Dorsolateral prefrontal cortex (tissue), 120 donors: ENCODE measurements at regions of chr15 and their contacts with region 1.

Region 1: DNA sequence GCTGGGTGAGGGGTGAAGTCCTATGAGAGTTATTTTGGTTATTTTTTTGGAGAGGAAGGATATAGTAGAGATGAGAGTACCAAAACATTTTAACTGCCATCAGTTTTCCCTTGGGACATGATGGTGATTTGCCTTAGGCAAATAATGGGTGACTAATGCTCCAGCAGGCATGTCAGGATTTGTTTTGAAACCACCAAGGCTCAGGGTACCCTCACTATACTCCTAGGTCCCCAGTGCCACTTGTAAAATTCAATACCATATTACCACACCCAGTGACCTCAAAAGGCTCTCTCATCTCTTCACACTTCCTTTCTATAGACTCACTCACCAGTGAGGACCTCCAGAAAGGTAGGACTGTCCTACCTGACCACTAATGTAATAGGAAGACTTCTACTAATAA is 83.6 kb downstream of the WDR72 start:
- DNase-seq: no peak
- H3K4me3 ChIP-seq: no peak overlapping the region
- H3K27ac ChIP-seq: no peak overlapping the region
- H3K27me3 ChIP-seq: peaks cover 0 to 11% (median 0%) of the 10 kb centered on the region in 45 donors
- CTCF ChIP-seq: no peak

Region 2: GRCh38 chr15:53448232-53449001 is 227.4 kb before region 1 on chr15:
- intact Hi-C with region 1: no loop called
- DNase-seq: no peak
- H3K4me3 ChIP-seq: peak overlapping the region in 1 of 59 donors; percentile 12
- H3K27ac ChIP-seq: no peak overlapping the region
- H3K27me3 ChIP-seq: peaks cover 0 to 5% (median 0%) of the 10 kb centered on the region in 45 donors
- CTCF ChIP-seq: no peak

Region 3: DNA sequence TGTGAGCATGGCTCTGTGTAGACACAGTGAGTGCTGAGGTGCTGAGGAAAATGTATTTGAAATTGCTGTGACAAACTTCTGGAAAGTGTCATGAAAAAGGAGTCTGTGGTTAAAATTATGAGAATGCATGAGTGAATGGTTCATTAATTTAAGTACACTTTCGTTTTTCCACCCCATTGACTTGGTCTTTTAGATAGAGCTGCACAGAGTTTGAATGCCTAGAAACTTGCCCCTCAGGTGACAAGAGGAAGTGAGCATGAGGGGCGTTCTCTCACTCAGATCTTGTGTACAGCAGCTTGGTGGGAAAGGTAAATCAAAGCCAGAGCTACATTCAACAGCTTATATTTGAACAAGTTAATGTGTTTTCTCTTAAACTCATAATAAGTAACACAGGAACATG is 213.2 kb before region 1 on chr15:
- intact Hi-C with region 1: loop called in 1 of 2 experiments (anchors 10 kb)
- DNase-seq: no peak
- H3K4me3 ChIP-seq: no peak overlapping the region
- H3K27ac ChIP-seq: no peak overlapping the region
- H3K27me3 ChIP-seq: peaks cover 0 to 15% (median 0%) of the 10 kb centered on the region in 45 donors
- CTCF ChIP-seq: no peak